Activated CD4-positive, alpha-beta T cell treated with anti-CD3 and anti-CD28 coated beads, Interleukin-2, amount 10 ng/mL, durations not matched to agents 24 days and 14 days (primary cell): ENCODE measurements at regions of chr2 and their contacts with region 1.

Region 1: DNA sequence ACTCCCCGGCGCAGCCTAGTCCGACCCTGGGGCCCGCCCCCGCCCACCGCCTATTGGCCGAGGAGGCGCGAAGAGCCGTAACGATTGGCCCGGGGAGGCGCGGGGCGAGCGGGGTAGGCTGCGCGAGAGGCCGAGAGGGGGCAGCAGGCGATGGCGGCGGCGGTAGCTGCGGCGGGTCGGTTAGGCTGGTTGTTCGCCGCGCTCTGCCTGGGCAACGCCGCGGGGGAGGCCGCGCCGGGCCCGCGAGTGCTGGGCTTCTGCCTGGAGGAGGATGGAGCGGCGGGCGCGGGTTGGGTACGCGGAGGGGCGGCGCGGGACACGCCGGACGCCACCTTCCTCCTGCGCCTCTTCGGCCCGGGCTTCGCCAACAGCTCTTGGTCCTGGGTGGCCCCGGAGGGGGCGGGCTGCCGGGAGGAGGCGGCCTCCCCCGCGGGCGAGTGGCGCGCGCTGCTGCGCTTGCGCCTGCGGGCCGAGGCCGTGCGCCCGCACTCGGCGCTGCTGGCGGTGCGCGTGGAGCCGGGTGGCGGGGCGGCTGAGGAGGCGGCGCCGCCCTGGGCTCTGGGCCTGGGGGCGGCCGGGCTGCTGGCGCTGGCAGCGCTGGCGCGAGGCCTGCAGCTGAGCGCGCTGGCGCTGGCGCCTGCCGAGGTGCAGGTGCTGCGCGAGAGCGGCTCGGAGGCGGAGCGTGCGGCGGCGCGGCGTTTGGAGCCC is at the start of gene CNNM3:
- DNase-seq: peak; percentile 99
- H3K4me3 Mint-ChIP-seq: peak within 1 kb of the TSS; percentile 91
- H3K27ac Mint-ChIP-seq: peak within 1 kb of the TSS; percentile 86
- H3K4me1 Mint-ChIP-seq: peaks cover 50% of the 10 kb centered on the region
- H3K27me3 Mint-ChIP-seq: no peaks in the 10 kb centered on the region
- total RNA-seq, gene CNNM3: 29.4 and 30.5 TPM in 2 replicates

Region 2: GRCh38 chr2:96638144-96639121 is 177.8 kb before region 1 on chr2 and contains the start of gene KANSL3:
- intact Hi-C with region 1: loop called (anchors 5 kb)
- DNase-seq: peak; percentile 98
- H3K4me3 Mint-ChIP-seq: peak within 1 kb of the TSS; percentile 97
- H3K27ac Mint-ChIP-seq: peak within 1 kb of the TSS; percentile 97
- H3K4me1 Mint-ChIP-seq: peaks cover 24% of the 10 kb centered on the region
- H3K27me3 Mint-ChIP-seq: peaks cover 3% of the 10 kb centered on the region
- total RNA-seq, gene KANSL3: 45.5 and 46.5 TPM in 2 replicates

Region 3: GRCh38 chr2:96801005-96801785 is 15.1 kb before region 1 on chr2:
- intact Hi-C with region 1: loop called (anchors 1 kb)
- DNase-seq: peak; percentile 91
- H3K4me3 Mint-ChIP-seq: no peak overlapping the region
- H3K27ac Mint-ChIP-seq: no peak overlapping the region
- H3K4me1 Mint-ChIP-seq: peaks cover 1% of the 10 kb centered on the region
- H3K27me3 Mint-ChIP-seq: no peaks in the 10 kb centered on the region

Region 4: DNA sequence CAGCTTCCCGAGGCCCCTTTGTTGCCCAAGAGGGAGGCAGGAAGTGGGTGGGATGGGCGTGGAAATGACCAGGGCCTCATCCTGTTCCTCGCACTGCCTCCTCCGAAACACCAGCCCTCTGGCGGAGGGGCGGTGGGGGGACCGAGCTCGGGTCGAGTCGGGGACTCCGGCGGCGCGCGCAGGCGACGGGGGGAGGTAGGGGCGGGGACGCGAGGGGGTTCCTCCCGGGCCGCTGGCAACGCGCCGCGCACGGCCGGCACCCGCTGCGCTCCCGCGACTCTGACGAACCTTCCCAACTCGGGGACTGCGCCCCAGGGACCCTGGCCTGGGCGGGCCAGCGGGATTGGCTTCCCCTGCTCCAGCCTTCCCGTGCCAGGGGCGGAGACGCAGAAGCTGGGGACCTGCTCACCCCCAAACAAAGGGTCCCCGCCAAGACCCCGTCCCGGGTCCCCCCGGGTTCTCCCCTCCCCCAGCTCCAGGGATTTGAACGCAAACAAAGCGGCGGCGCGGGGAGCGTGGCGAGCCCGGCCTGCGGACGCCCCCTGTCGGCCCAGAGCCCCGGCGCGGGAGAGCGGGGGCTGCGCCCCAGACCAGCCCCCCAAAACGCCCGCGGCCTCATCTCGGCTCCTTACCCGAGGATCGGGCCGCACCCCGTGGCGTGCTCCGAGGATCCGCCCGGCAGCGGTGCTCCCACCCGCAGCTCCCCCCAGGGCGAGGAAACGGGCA is 52.4 kb after region 1 on chr2:
- intact Hi-C with region 1: loop called (anchors 1 kb)
- DNase-seq: peak; percentile 90
- H3K4me3 Mint-ChIP-seq: peak overlapping the region; percentile 87
- H3K27ac Mint-ChIP-seq: peak overlapping the region; percentile 84
- H3K4me1 Mint-ChIP-seq: peaks cover 21% of the 10 kb centered on the region
- H3K27me3 Mint-ChIP-seq: peaks cover 10% of the 10 kb centered on the region